Transverse colon (tissue), 4 donors: ENCODE measurements at regions of chr10 and their contacts with region 1.

Region 1: DNA sequence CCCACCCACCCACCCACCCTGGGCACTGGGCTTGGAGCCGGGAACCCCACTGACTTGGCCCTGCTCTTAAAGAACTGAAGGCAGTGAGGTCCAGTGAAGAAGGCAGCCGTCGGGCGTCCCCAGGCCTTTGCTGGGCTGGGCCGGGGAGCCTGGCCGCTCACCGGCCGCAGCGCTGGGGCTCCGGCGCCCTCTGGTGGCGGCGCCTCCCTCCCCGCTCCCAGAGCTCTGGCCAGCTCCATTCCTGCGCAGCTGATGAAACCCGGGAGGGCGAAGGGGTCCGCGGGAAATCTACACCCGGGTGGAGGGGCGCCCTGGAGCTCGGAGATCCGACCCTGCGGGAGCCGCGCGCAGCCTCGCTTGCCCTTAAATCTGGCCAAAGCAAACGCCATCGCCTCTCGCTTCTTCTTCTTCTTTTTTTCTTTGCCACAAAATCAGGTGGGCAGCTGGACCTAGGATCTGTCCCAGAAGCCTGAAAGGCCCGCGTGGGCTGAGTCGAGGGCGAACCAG is 1.7 kb upstream of the CXCL12 start:
- DNase-seq: peak; percentile 57
- H3K4me3 ChIP-seq: no peak overlapping the region
- H3K27ac ChIP-seq: peak overlapping the region in 1 of 4 donors; percentile 75
- H3K4me1 ChIP-seq: peaks cover 0 to 21% (median 13%) of the 10 kb centered on the region in 4 donors
- H3K27me3 ChIP-seq: peaks cover 37% of the 10 kb centered on the region
- CTCF ChIP-seq: peak; percentile 74 to 91 (median 85)
- EP300 ChIP-seq: no peak
- POLR2A ChIP-seq: no peak

Region 2: DNA sequence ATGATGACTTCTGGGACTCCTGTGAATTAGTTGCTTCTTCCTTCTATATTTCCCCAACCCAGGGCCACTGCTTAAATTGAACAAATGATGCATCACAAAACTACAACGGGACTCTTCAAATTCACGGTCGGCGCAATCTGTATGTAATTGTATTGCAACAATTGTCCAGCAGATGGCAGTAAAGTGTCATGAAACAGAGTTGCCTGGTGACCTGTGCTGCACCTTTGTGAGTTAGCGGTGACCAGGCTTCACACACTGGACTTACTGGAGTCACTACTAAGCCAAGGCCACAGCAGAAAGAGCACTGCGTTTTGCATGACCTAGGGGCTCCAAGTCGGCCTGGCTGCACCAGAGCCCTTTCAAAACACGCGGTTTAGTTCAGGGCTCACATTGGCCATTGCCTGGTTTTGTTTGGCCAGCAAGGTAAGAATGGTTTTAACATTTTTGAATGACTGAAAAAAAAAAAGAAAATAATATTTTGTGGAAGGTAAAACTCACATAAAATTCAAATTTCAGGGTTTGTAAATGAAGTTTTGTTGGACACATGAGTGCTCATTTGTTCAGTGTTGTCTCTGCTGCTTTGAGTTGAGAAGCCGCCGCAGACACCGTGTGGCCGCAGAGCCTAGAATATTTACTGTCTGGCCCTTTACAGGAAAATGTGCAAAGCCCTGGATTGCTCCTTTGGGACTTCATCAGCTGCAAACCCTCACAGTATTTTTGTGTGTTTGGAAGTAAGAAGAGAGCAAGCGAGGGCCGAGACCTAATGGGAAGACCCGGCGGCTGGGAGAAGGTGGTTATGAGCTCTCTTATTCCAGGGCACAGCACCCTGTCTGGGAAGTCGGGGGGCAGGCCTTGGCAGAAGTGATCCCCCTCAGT is 714.7 kb before region 1 on chr10:
- in situ Hi-C with region 1: loop called in 3 of 4 experiments (anchors 5 to 10 kb)
- intact Hi-C with region 1: loop called (anchors 5 kb)
- DNase-seq: peak; percentile 30
- H3K4me3 ChIP-seq: no peak overlapping the region
- H3K27ac ChIP-seq: no peak overlapping the region
- H3K4me1 ChIP-seq: peaks cover 0 to 6% (median 0%) of the 10 kb centered on the region in 4 donors
- H3K27me3 ChIP-seq: peaks cover 27% of the 10 kb centered on the region
- CTCF ChIP-seq: peak; percentile 73 to 85 (median 78)
- EP300 ChIP-seq: no peak
- POLR2A ChIP-seq: no peak

Region 3: GRCh38 chr10:43689955-43690771 is 696.4 kb before region 1 on chr10:
- in situ Hi-C with region 1: loop called in 1 of 4 experiments (anchors 10 kb)
- intact Hi-C with region 1: loop called (anchors 1 kb)
- DNase-seq: peak; percentile 86
- H3K4me3 ChIP-seq: peak overlapping the region; percentile 35 to 57 (median 42)
- H3K27ac ChIP-seq: peak overlapping the region; percentile 60 to 75 (median 72)
- H3K4me1 ChIP-seq: peaks cover 0 to 14% (median 10%) of the 10 kb centered on the region in 4 donors
- H3K27me3 ChIP-seq: no peaks in the 10 kb centered on the region
- CTCF ChIP-seq: peak; percentile 83 to 96 (median 91)
- EP300 ChIP-seq: no peak
- POLR2A ChIP-seq: peak; percentile 39

Region 4: DNA sequence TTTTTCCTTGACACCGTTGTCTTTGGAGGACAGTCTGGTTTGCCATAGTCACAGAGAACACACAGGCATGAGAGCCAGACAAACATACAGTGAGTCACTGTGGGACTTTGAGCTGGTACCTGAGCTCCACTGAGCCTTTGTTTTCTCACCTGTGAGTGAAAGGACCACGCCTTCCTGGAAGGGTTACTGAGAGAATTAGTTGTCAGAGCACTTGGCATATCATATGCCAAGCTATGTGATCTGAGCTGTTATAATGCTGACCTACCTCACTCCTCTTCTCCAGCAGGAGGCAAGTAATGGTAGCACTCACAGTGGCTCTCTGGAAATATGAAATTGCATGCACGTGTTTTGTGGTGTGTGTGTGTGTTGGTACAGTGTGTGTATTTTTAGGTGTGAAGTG is 61.4 kb before region 1 on chr10:
- in situ Hi-C with region 1: no loop called
- intact Hi-C with region 1: loop called (anchors 10 kb)
- DNase-seq: peak; percentile 71
- H3K4me3 ChIP-seq: no peak overlapping the region
- H3K27ac ChIP-seq: peak overlapping the region; percentile 10 to 79 (median 71)
- H3K4me1 ChIP-seq: peaks cover 4 to 24% (median 14%) of the 10 kb centered on the region in 4 donors
- H3K27me3 ChIP-seq: no peaks in the 10 kb centered on the region
- CTCF ChIP-seq: peak in 2 of 5 experiments; percentile 40 to 58
- EP300 ChIP-seq: no peak
- POLR2A ChIP-seq: no peak

Region 5: DNA sequence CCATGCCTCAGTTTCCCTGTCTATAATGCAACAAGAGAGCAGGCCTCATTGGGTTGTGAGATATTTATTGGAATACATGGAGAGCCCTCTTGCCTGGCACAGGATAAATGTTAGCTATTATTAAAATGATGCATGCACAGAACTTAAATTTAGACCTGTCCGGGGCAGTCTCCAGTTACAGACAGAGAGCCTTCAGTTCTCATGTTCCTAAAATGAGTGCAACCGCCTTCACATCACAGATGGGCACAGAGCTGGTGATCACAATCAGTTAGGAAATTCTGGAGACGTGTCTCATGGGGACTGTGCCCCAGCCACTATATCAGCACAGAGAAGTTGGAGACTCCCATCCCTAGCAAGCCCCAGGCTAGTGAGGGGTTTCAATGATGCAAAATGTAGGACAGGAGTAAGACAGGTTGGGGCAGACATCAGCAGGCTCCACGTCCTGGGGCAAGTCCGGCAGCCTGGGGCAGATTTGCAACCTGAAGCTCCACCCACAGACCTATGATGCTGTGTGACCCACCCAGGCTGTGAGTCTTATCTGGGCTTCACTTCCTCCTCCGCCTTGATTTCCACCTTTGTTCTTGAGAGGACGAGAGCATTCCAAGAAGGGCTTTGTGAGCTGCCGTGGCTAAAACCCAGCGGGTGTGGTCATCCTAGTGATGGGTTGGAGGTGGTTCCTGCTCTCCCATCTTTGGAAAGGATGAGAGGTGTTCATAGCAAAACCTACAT is 51.1 kb before region 1 on chr10:
- in situ Hi-C with region 1: no loop called
- intact Hi-C with region 1: no loop called
- DNase-seq: no peak
- H3K4me3 ChIP-seq: no peak overlapping the region
- H3K27ac ChIP-seq: no peak overlapping the region
- H3K4me1 ChIP-seq: no peaks in the 10 kb centered on the region
- H3K27me3 ChIP-seq: no peaks in the 10 kb centered on the region
- CTCF ChIP-seq: no peak
- EP300 ChIP-seq: no peak
- POLR2A ChIP-seq: no peak

Region 6: GRCh38 chr10:44864637-44865288 is 478.2 kb after region 1 on chr10:
- in situ Hi-C with region 1: loop called (anchors 10 to 25 kb)
- intact Hi-C with region 1: loop called (anchors 10 kb)
- DNase-seq: peak; percentile 93
- H3K4me3 ChIP-seq: peak overlapping the region in 3 of 4 donors; percentile 31 to 59 (median 33)
- H3K27ac ChIP-seq: peak overlapping the region; percentile 32 to 63 (median 50)
- H3K4me1 ChIP-seq: peaks cover 0 to 13% (median 8%) of the 10 kb centered on the region in 4 donors
- H3K27me3 ChIP-seq: peaks cover 10% of the 10 kb centered on the region
- CTCF ChIP-seq: peak; percentile 96 to 98 (median 97)
- EP300 ChIP-seq: no peak
- POLR2A ChIP-seq: no peak